Activated T-helper 2 cell treated with anti-CD3 and anti-CD28 coated beads, Interferon-gamma antibody, Interleukin-2, Interleukin-4, amounts not matched to agents 10 μg/mL and 5 μg/mL and 100 μg/mL, durations not matched to agents 14 hours and 24 hours and 36 hours (primary cell): ENCODE measurements at regions of chr10 and their contacts with region 1.

Region 1: GRCh38 chr10:74502963-74503608 is 323.3 kb upstream of the KAT6B start:
- DNase-seq: no peak
- H3K4me3 Mint-ChIP-seq: no peak overlapping the region
- H3K27ac Mint-ChIP-seq: peak overlapping the region; percentile 44
- H3K4me1 Mint-ChIP-seq: peaks cover 42% of the 10 kb centered on the region
- H3K27me3 Mint-ChIP-seq: no peaks in the 10 kb centered on the region

Region 2: DNA sequence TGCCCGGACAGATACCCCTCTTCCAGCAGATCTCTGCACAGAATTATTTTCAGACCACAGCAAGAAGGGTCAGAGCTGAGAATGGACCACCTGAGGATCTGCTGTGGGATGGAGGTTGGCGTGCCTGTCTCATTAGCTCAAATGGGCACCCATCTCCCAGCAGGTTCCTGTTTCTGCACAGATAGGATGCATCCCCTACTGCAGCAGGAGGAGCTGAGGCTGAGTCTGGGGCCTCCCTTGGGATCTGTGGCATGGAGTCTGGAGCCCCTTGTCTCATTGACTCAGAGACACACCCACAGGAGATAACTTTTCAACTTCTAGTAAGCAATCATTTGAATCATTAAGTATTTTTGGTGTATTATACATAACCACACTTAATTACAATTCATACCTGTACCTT is 139.4 kb before region 1 on chr10:
- intact Hi-C with region 1: loop called (anchors 1 kb)
- DNase-seq: no peak
- H3K4me3 Mint-ChIP-seq: no peak overlapping the region
- H3K27ac Mint-ChIP-seq: no peak overlapping the region
- H3K4me1 Mint-ChIP-seq: peaks cover 24% of the 10 kb centered on the region
- H3K27me3 Mint-ChIP-seq: no peaks in the 10 kb centered on the region

Region 3: DNA sequence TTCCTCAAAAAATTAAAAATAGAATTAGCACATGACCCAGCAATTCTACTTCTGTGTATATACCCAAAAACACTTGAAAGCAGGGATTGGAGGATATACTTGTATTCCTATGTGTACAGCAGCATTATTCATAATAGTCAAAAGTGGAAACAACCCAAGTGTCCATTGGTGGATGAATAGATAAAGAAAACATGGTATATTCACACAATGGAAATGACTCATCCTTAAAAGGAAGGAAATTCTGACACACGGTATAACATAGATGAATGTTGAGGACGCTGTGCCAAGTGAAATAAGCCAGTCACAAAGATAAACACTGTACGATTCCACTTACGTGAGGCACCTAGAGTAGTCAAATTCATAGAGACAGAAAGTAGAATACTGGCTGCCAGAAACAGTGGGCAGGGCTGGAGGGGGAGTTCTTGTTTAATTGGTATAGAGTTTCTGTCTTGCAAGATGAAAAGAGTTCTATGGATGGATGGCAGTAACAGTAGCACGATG is 296.7 kb after region 1 on chr10:
- intact Hi-C with region 1: loop called (anchors 5 kb)
- DNase-seq: peak; percentile 12
- H3K4me3 Mint-ChIP-seq: no peak overlapping the region
- H3K27ac Mint-ChIP-seq: peak overlapping the region; percentile 68
- H3K4me1 Mint-ChIP-seq: peaks cover 14% of the 10 kb centered on the region
- H3K27me3 Mint-ChIP-seq: peaks cover 2% of the 10 kb centered on the region